K562 (cell line): ENCODE measurements at regions of chr15 and their contacts with region 1.

Region 1: GRCh38 chr15:65304389-65305144 is at the start of gene RNU5B-1:
- DNase-seq: peak; percentile 76 to 93 (median 80)
- ATAC-seq: peak; percentile 92
- H3K4me3 ChIP-seq: peak within 1 kb of the TSS; percentile 28
- H3K27ac ChIP-seq: peak within 1 kb of the TSS; percentile 93
- H3K4me1 ChIP-seq: peaks cover 14 to 15% of the 10 kb centered on the region in 2 experiments
- H3K27me3 ChIP-seq: no peaks in the 10 kb centered on the region
- CTCF ChIP-seq: peak; percentile 72 to 92 (median 88)
- EP300 ChIP-seq: peak; percentile 72
- POLR2A ChIP-seq: peak; percentile 100
- RAD21 ChIP-seq: peak; percentile 5 to 27; a peak in 3 of 4 replicates
- polyA plus RNA-seq, gene RNU5B-1: not detected

Region 2: DNA sequence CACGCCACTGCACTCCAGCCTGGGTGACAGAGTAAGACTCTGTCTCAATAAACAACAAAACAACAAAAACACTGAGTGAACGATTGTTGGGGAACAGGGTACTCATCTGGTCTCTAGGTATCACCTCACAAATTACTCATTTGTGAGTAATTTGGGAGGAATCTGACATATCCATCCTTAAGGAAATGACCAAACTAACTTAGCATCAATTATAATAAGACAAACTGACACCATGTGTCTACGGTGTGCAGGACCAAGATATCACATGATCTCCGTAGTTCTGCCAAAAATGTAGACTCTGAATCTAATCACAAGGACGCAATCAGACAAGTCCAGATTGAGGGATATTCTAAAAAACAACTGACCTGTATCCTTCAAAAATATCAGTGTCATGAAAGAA is 1246.3 kb before region 1 on chr15:
- CTCF ChIA-PET with region 1: no interaction called
- POLR2A ChIA-PET with region 1: no interaction called
- in situ Hi-C with region 1: no loop called
- intact Hi-C with region 1: no loop called
- DNase-seq: no peak
- ATAC-seq: no peak
- H3K4me3 ChIP-seq: no peak overlapping the region
- H3K27ac ChIP-seq: no peak overlapping the region
- H3K4me1 ChIP-seq: no peaks in the 10 kb centered on the region
- H3K27me3 ChIP-seq: no peaks in the 10 kb centered on the region
- CTCF ChIP-seq: no peak
- EP300 ChIP-seq: no peak
- POLR2A ChIP-seq: no peak
- RAD21 ChIP-seq: no peak

Region 3: DNA sequence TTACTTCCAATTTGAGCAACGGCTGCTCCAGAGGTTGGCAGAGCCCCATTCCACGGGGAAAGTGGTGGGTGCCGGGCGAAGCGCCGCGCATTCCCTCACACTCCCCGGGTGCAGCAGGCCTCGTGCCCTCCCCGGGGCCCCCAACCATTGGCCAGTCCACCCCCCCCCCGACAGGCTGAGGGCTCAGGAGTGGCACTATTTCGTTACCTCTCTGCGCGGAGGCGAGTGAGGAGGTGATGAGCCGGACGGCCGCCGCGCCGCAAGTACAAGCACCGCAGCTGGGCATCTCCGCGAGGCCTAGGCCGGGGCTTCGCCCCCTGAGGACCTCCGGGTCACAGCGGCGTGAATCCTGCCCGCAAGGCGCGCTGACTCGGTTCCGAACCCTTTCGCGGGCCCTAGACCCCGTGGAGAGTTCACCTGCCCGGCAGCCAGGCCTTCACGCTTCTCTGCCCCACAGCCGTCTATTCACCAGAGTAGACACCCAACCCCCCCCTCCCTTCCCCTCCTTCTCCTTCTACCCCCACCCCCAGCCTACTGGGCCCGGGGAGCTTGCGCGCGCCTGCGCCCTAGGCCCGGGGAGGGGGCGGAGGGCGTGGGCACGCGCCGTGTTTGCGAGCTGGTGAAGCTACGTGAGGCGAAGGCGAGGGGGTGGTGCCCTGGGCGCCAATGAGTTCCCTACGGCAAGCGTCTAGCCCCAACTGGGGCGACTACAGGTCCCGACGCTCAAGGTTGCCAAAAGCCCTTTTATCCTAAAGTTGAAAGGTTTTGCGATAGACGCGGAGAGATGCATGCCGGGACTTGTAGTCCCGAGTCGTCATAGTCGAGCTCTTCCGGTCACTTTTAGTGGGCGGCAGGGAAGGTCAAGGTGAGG is 119.5 kb before region 1 on chr15 and contains the start of gene CLPX:
- CTCF ChIA-PET with region 1: interaction called, 9 read pairs
- POLR2A ChIA-PET with region 1: interaction called, 99 read pairs
- in situ Hi-C with region 1: loop called (anchors 5 kb)
- intact Hi-C with region 1: loop called (anchors 2 kb)
- DNase-seq: peak; percentile 94 to 98 (median 97)
- ATAC-seq: peak; percentile 91
- H3K4me3 ChIP-seq: peak within 1 kb of the TSS; percentile 70
- H3K27ac ChIP-seq: peak within 1 kb of the TSS; percentile 86
- H3K4me1 ChIP-seq: peaks cover 10 to 12% of the 10 kb centered on the region in 2 experiments; a peak in 4 of 5 replicates
- H3K27me3 ChIP-seq: no peaks in the 10 kb centered on the region
- CTCF ChIP-seq: no peak
- EP300 ChIP-seq: no peak
- POLR2A ChIP-seq: peak; percentile 79
- RAD21 ChIP-seq: no peak
- polyA plus RNA-seq, gene CLPX: 11.2 to 13.4 TPM

Region 4: GRCh38 chr15:65231306-65231705 is 73.3 kb before region 1 on chr15:
- CTCF ChIA-PET with region 1: no interaction called
- POLR2A ChIA-PET with region 1: interaction called, 13 read pairs
- in situ Hi-C with region 1: no loop called
- intact Hi-C with region 1: no loop called
- DNase-seq: peak in 1 of 4 experiments; percentile 28
- ATAC-seq: no peak
- H3K4me3 ChIP-seq: no peak overlapping the region
- H3K27ac ChIP-seq: no peak overlapping the region
- H3K4me1 ChIP-seq: peaks cover under 1 to 1% of the 10 kb centered on the region in 2 experiments; a peak in 2 of 5 replicates
- H3K27me3 ChIP-seq: no peaks in the 10 kb centered on the region
- CTCF ChIP-seq: no peak
- EP300 ChIP-seq: no peak
- POLR2A ChIP-seq: no peak
- RAD21 ChIP-seq: no peak

Region 5: DNA sequence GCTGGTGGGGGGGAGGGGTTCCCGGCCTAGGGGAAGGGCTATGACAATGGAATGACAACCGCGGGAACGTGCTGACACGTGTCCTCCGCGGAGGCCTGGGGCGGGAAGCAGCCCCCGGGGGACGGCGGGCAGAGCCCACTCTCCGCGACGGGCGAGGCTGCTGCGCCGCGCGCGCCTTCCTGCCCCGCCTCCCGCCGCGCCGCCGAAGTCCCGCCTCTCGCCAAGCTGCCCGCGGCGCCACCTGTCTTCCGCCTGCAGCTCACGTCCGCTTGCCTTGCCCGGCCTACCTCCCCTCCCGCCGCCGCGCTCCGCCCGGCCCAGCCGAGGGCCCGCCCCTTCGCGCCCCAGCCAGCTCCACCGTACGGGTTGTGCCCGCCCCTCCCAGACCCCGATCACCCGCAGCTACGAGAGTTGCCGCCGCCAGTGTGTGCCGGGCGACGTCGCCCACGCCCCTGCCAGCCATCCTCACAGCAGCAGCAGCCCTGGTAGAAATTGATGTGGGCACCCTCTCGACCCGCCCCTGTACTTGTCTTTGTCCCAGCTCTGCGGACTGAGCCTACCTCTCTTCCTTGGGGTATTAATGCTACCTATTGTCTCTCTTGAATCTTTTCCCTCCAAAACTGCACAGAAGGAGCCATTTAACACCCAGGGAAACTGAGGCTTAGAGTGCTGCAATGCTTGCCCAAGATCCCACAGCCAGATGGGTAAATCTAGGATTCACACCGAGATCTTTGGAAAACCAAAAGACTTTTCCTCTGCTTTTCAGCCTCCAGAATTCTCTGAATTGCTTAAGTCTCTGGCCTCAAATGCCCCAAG is 17.7 kb before region 1 on chr15 and contains the start of gene PARP16:
- CTCF ChIA-PET with region 1: no interaction called
- POLR2A ChIA-PET with region 1: interaction called, 91 read pairs
- in situ Hi-C with region 1: no loop called
- intact Hi-C with region 1: no loop called
- DNase-seq: peak; percentile 85 to 94 (median 92)
- ATAC-seq: peak; percentile 98
- H3K4me3 ChIP-seq: peak within 1 kb of the TSS; percentile 53
- H3K27ac ChIP-seq: peak within 1 kb of the TSS; percentile 68
- H3K4me1 ChIP-seq: peaks cover 10 to 17% of the 10 kb centered on the region in 2 experiments; a peak in 4 of 5 replicates
- H3K27me3 ChIP-seq: no peaks in the 10 kb centered on the region
- CTCF ChIP-seq: peak in 2 of 3 experiments; percentile 56 to 67; a peak in 3 of 6 replicates
- EP300 ChIP-seq: no peak
- POLR2A ChIP-seq: peak; percentile 69
- RAD21 ChIP-seq: no peak
- polyA plus RNA-seq, gene PARP16: 3.0 to 5.6 TPM

Region 6: DNA sequence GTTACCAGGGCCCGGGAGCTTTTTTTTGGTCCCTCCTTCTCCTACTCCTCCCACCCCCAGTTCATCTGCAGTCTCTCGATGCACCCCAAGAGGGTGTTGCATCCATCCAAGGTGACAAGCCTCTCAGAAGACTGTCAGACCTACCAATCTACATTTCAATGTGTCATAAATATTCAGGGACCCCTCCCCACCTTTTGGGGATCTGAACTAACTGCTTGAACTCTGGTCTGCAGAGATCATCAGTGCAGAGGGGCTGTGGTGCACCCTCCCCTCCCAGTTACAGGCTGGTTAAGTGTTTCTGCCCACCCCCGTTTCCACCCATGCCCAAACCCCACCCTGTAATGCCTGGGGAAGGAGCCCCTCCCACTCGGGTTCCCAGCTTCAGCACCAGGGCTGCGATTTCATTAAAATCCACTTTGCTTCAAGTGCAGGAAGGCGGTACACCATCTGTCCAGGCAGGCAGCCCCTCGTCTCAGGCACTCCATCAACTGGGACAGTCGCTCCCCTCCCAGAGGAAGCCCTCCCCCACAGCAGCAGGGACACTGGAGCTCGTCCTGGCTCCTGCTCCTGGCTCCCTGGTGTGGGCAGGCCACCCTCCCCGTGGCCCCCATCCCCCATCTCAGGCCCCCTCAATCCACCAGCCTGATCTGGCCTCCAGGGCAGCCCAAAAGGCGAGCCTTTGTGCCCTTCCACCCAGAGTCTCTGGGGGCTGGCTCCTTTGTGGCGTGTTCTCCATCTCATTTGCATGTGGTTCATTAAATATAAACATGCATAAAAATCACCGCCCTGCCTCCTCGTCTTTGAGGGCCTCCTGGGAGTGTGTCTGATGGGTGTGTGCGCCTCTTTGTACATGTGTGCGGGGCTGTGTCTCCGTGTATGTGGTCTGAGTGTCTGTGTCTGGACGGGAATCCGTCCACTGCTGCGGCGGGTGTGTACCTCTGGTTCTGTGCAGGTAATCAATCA is 32.2 kb after region 1 on chr15:
- CTCF ChIA-PET with region 1: no interaction called
- POLR2A ChIA-PET with region 1: interaction called, 35 read pairs
- in situ Hi-C with region 1: no loop called
- intact Hi-C with region 1: no loop called
- DNase-seq: no peak
- ATAC-seq: peak; percentile 33; the same call in 2 of the 3 replicates
- H3K4me3 ChIP-seq: no peak overlapping the region
- H3K27ac ChIP-seq: no peak overlapping the region
- H3K4me1 ChIP-seq: peaks cover 5 to 26% of the 10 kb centered on the region in 2 experiments
- H3K27me3 ChIP-seq: peaks cover 35 to 65% of the 10 kb centered on the region in 2 experiments; a peak in 4 of 5 replicates
- CTCF ChIP-seq: peak in 1 of 3 experiments; percentile 13; a peak in 1 of 6 replicates
- EP300 ChIP-seq: no peak
- POLR2A ChIP-seq: no peak
- RAD21 ChIP-seq: no peak

Region 7: DNA sequence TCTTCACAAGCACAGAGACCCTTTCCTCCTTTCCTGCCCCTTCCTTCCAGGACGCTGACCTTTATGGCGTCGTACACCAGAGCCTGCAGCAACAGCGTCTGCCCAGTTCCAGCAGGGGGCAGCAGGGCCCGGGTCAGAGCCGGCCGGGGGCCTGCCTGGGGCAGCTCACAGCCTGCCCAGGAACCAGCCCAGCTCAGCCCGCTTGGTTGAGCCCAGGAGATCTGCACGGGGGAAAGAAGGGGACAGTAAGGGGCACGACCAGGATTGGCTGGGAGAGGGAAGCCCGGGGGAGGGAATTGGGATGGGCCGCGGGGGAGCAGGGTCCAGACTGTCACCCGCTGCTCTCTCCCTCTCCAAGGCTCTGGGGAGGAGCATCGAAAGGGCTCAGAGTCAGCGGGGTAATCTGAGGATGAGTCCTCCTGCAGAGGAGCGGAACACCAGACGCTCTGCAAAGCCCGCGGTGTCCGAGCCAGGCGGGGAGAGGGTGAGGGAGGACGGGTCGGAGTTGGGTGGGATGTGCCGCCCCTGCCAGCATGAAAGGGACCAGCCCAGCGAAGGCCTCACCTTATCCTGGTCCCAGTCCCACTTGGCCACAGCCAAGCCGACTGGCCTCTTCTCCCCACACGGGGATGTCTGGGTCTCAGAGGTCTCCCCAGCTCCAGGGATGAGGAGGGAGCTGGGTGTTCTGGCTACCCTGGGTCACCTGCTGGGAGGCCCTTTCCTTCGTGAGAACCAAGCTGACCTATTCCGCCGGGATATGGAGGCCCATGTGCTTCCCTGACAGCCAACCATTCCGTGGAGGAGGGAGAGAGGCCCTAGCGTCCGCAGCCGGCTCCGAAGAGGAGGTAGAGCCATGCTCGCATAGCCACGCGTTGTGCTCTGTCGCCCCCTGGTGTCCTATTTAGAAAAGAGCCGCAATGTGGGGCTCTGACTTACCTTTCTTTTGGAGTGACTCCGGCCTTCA is 80.6 kb after region 1 on chr15:
- CTCF ChIA-PET with region 1: no interaction called
- POLR2A ChIA-PET with region 1: interaction called, 21 read pairs
- in situ Hi-C with region 1: no loop called
- intact Hi-C with region 1: no loop called
- DNase-seq: peak; percentile 88 to 91 (median 90)
- ATAC-seq: peak; percentile 96
- H3K4me3 ChIP-seq: peak overlapping the region; percentile 20; the same call in 1 of the 2 replicates
- H3K27ac ChIP-seq: no peak overlapping the region
- H3K4me1 ChIP-seq: peaks cover 6 to 15% of the 10 kb centered on the region in 2 experiments; a peak in 4 of 5 replicates
- H3K27me3 ChIP-seq: peaks cover 48 to 66% of the 10 kb centered on the region in 2 experiments; a peak in 4 of 5 replicates
- CTCF ChIP-seq: peak; percentile 93 to 97 (median 96)
- EP300 ChIP-seq: no peak
- POLR2A ChIP-seq: no peak
- RAD21 ChIP-seq: peak; percentile 86 to 96

Region 8: GRCh38 chr15:65460741-65461347 is 156.3 kb after region 1 on chr15:
- CTCF ChIA-PET with region 1: no interaction called
- POLR2A ChIA-PET with region 1: no interaction called
- in situ Hi-C with region 1: no loop called
- intact Hi-C with region 1: no loop called
- DNase-seq: no peak
- ATAC-seq: no peak
- H3K4me3 ChIP-seq: no peak overlapping the region
- H3K27ac ChIP-seq: no peak overlapping the region
- H3K4me1 ChIP-seq: no peaks in the 10 kb centered on the region
- H3K27me3 ChIP-seq: no peaks in the 10 kb centered on the region
- CTCF ChIP-seq: no peak
- EP300 ChIP-seq: no peak
- POLR2A ChIP-seq: no peak
- RAD21 ChIP-seq: no peak